IMR-90 (cell line): ENCODE measurements at regions of chr6 and their contacts with region 1.

Region 1: DNA sequence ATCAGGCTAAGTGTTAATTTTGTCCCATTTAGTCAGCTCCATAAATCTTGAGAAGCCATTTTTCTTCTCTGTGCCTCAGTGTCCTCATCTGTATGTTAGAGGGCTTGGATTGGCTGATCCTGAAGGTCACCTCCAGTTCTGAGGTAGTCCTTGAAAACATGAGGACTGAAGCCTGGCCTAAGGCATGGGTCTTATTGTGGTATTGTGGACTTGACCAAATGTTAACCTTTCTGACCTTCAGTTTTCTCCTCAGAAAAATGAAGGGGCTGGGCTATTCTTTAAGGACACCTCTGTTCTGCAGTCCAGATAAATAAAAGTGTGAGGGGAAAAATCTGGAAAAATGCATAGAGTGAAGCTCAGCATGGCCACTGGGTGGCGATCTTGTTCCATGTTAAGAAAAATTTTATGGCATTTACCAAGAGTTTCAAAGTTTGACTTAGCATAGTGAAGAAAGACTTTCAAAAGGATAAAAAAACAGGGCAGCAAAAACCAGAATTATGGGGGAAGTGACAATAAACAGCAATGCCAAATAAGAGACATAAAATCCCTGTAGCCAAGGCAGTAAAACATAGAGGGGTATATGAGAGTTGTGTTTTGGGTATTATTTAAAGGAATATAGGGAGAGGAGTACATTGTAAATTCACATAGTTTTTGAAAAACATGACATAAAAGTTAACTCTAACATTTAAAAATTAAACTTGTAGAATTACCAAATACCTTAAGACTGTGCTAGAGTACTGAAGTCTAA is 13.2 kb upstream of the TFB1M start:
- DNase-seq: peak; percentile 78
- ATAC-seq: peak; percentile 92
- H3K4me3 ChIP-seq: no peak overlapping the region
- H3K27ac ChIP-seq: peak overlapping the region; percentile 83
- H3K4me1 ChIP-seq: peaks cover 7% of the 10 kb centered on the region; the same call in 1 of the 2 replicates
- H3K27me3 ChIP-seq: no peaks in the 10 kb centered on the region
- CTCF ChIP-seq: peak; percentile 91
- POLR2A ChIP-seq: no peak
- RAD21 ChIP-seq: peak; percentile 89

Region 2: DNA sequence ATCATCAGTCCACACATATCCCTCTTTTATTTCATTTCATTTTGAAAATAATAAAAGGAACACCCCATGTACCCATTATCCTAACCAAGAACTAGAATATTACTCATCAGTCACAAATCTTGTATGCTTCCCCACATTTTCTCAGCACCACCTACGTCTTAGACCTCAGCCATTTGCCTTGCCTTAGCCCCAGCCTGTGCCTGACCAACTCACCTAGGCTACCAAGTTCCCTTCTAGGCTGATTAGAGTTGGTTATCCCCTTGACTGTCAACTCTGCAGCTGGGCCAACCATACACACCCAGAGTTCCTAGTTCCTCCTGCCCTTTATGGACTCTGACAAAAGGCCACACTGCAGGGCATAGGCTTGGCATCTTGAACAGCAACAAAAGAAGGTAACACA is 937.5 kb before region 1 on chr6:
- CTCF ChIA-PET with region 1: no interaction called
- POLR2A ChIA-PET with region 1: no interaction called
- dilution Hi-C with region 1: no loop called
- in situ Hi-C with region 1: no loop called
- intact Hi-C with region 1: no loop called
- DNase-seq: no peak
- ATAC-seq: no peak
- H3K4me3 ChIP-seq: no peak overlapping the region
- H3K27ac ChIP-seq: no peak overlapping the region
- H3K4me1 ChIP-seq: peaks cover 9% of the 10 kb centered on the region
- H3K27me3 ChIP-seq: no peaks in the 10 kb centered on the region
- CTCF ChIP-seq: no peak
- POLR2A ChIP-seq: no peak
- RAD21 ChIP-seq: no peak

Region 3: DNA sequence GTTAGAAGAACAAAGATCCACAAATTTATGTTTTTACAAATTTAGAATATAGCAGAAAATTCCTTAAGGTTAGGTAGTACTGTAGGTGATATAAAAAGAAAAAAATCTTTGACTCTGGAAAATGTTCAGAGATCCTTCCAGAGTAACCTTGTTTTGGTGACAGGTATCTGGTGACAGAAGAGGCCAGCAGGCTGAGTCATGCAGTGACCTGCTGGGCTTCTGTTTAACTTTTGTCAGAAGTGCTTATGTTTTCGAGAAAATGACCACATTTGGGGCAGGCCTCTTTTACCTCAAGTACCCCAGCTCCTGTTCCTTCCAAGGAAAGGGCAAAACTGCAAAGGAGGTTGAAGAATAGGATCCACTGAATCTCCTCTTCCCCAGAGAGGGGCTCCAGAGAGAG is 74.2 kb before region 1 on chr6:
- CTCF ChIA-PET with region 1: no interaction called
- POLR2A ChIA-PET with region 1: no interaction called
- dilution Hi-C with region 1: no loop called
- in situ Hi-C with region 1: no loop called
- intact Hi-C with region 1: no loop called
- DNase-seq: no peak
- ATAC-seq: no peak
- H3K4me3 ChIP-seq: no peak overlapping the region
- H3K27ac ChIP-seq: no peak overlapping the region
- H3K4me1 ChIP-seq: peaks cover 10% of the 10 kb centered on the region
- H3K27me3 ChIP-seq: no peaks in the 10 kb centered on the region
- CTCF ChIP-seq: no peak
- POLR2A ChIP-seq: no peak
- RAD21 ChIP-seq: no peak

Region 4: DNA sequence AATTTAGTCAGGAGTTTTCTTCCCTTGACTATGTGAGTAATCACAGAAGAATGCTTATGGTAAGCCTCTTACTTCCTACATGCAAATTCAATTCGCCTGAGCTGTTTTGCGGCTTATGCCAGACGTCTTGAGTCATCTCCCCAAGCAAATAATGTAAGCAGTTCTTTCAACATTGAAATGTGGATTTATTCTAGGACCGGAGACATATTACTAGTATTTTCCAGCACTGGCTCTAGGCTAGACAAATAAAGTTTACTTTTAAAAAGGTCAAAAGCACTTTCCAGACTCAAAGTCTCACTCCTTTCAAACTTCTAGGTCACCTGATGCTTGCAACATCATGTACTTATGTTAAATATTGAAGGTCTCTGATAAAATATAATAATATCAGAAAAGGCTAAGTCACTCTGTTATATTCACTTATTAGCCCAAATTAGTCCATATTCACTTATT is 166.2 kb after region 1 on chr6:
- CTCF ChIA-PET with region 1: interaction called, 6 read pairs
- POLR2A ChIA-PET with region 1: no interaction called
- dilution Hi-C with region 1: no loop called
- in situ Hi-C with region 1: loop called (anchors 5 kb)
- intact Hi-C with region 1: loop called (anchors 1 kb)
- DNase-seq: peak; percentile 100
- ATAC-seq: peak; percentile 73
- H3K4me3 ChIP-seq: no peak overlapping the region
- H3K27ac ChIP-seq: no peak overlapping the region; the same call in 1 of the 2 replicates
- H3K4me1 ChIP-seq: peaks cover 18% of the 10 kb centered on the region
- H3K27me3 ChIP-seq: no peaks in the 10 kb centered on the region
- CTCF ChIP-seq: no peak
- POLR2A ChIP-seq: 0 out of 2 replicates have a peak, but pooled peaks have one; percentile 39
- RAD21 ChIP-seq: no peak

Region 5: GRCh38 chr6:155782320-155782731 is 454.8 kb after region 1 on chr6:
- CTCF ChIA-PET with region 1: no interaction called
- POLR2A ChIA-PET with region 1: no interaction called
- dilution Hi-C with region 1: no loop called
- in situ Hi-C with region 1: no loop called
- intact Hi-C with region 1: loop called (anchors 5 kb)
- DNase-seq: peak; percentile 99
- ATAC-seq: peak; percentile 85
- H3K4me3 ChIP-seq: no peak overlapping the region
- H3K27ac ChIP-seq: peak overlapping the region; percentile 88
- H3K4me1 ChIP-seq: peaks cover 18% of the 10 kb centered on the region
- H3K27me3 ChIP-seq: no peaks in the 10 kb centered on the region
- CTCF ChIP-seq: no peak
- POLR2A ChIP-seq: peak; percentile 75
- RAD21 ChIP-seq: peak; percentile 18; the same call in 1 of the 2 replicates

Region 6: GRCh38 chr6:155861821-155862220 is 534.3 kb after region 1 on chr6:
- CTCF ChIA-PET with region 1: no interaction called
- POLR2A ChIA-PET with region 1: no interaction called
- dilution Hi-C with region 1: no loop called
- in situ Hi-C with region 1: no loop called
- intact Hi-C with region 1: no loop called
- DNase-seq: no peak
- ATAC-seq: no peak
- H3K4me3 ChIP-seq: no peak overlapping the region
- H3K27ac ChIP-seq: no peak overlapping the region
- H3K4me1 ChIP-seq: no peaks in the 10 kb centered on the region
- H3K27me3 ChIP-seq: no peaks in the 10 kb centered on the region
- CTCF ChIP-seq: no peak
- POLR2A ChIP-seq: no peak
- RAD21 ChIP-seq: no peak

Region 7: GRCh38 chr6:156107624-156108101 is 780.2 kb after region 1 on chr6:
- CTCF ChIA-PET with region 1: no interaction called
- POLR2A ChIA-PET with region 1: no interaction called
- dilution Hi-C with region 1: no loop called
- in situ Hi-C with region 1: no loop called
- intact Hi-C with region 1: loop called (anchors 2 kb)
- DNase-seq: no peak
- ATAC-seq: peak; percentile 33
- H3K4me3 ChIP-seq: no peak overlapping the region
- H3K27ac ChIP-seq: no peak overlapping the region
- H3K4me1 ChIP-seq: peaks cover 5% of the 10 kb centered on the region
- H3K27me3 ChIP-seq: no peaks in the 10 kb centered on the region
- CTCF ChIP-seq: no peak
- POLR2A ChIP-seq: no peak
- RAD21 ChIP-seq: no peak

Region 8: DNA sequence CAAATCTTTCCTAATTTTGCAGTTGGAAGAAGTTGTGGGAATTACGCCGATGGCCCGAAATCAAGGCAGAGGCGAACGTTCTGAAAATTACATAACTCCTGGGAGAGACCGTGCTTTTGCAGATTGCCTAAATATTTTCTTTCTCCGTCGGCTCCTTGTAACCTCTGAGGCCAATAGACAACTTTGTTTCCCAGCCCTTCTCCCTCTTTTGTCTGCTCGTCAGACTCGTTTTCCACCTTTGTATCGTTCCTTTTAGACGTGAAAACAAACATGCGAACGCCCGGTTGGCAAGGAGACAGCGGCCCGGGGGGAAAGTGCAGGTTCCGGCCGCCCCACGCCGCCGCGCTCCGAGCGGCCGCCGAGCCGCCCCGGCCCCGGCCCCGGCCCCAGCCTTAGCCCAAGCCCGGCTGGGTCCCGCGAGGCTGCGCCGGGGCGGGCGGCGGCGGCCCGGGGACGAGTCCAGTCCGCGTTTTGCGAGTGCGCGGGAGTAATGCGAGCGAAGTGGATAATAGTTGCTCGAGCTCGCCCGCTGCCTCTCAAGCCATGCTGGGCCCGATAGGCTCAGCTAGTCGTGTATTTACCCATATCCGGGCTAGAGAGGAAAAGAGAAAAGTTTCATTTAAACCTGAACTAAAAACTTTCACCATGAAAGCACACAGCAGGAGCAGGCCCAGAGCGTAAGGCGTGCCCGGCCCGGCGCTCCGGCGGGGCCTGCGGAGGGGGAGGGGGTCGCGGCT is 1449.5 kb after region 1 on chr6 and contains the start of gene ARID1B:
- CTCF ChIA-PET with region 1: no interaction called
- POLR2A ChIA-PET with region 1: no interaction called
- dilution Hi-C with region 1: no loop called
- in situ Hi-C with region 1: no loop called
- intact Hi-C with region 1: loop called (anchors 5 kb)
- DNase-seq: peak; percentile 83
- ATAC-seq: peak; percentile 57
- H3K4me3 ChIP-seq: peak within 1 kb of the TSS; percentile 99
- H3K27ac ChIP-seq: peak within 1 kb of the TSS; percentile 100
- H3K4me1 ChIP-seq: peaks cover 6% of the 10 kb centered on the region
- H3K27me3 ChIP-seq: no peaks in the 10 kb centered on the region
- CTCF ChIP-seq: no peak
- POLR2A ChIP-seq: peak; percentile 78
- RAD21 ChIP-seq: peak; percentile 29
- total RNA-seq, gene ARID1B: 14.5 and 22.8 TPM in 2 replicates

Region 9: DNA sequence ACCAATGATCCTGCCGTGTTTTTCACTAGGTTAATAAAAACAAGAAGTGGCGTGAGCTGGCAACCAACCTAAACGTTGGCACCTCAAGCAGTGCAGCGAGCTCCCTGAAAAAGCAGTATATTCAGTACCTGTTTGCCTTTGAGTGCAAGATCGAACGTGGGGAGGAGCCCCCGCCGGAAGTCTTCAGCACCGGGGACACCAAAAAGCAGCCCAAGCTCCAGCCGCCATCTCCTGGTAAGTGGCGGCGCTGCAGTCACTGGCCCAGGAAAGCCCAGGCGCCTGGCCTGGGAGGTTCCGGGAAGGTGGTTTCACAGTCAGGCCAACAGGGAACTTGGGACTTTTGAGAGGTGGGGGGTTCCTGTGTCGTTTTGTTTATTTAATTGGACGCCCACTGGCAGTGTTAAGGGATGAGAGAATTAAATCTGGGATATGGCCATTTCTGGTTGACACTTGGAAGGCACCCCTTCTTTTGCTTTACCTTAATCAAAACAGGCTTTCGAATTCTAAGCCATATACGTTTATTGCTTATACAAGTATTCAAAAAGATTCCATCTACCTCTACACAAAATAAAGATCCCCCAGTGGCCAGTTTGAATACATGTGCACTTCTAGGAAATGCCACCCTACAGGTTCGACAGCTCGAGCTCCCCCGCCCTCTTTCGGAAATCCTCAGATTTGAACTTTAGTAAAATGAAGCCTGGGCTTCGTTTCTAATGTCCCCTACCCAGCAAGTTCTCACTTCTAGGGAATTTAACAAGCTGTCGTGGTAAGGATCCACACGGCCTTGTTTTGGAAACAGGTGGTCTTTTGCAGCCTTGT is 1856.9 kb after region 1 on chr6:
- CTCF ChIA-PET with region 1: no interaction called
- POLR2A ChIA-PET with region 1: no interaction called
- dilution Hi-C with region 1: no loop called
- in situ Hi-C with region 1: loop called (anchors 25 kb)
- intact Hi-C with region 1: loop called (anchors 5 kb)
- DNase-seq: peak; percentile 56
- ATAC-seq: peak; percentile 91
- H3K4me3 ChIP-seq: no peak overlapping the region
- H3K27ac ChIP-seq: no peak overlapping the region
- H3K4me1 ChIP-seq: peaks cover 3% of the 10 kb centered on the region; the same call in 1 of the 2 replicates
- H3K27me3 ChIP-seq: no peaks in the 10 kb centered on the region
- CTCF ChIP-seq: peak; percentile 89
- POLR2A ChIP-seq: no peak
- RAD21 ChIP-seq: peak; percentile 96